IMR-90 (cell line): ENCODE measurements at regions of chr14 and their contacts with region 1.

Region 1: DNA sequence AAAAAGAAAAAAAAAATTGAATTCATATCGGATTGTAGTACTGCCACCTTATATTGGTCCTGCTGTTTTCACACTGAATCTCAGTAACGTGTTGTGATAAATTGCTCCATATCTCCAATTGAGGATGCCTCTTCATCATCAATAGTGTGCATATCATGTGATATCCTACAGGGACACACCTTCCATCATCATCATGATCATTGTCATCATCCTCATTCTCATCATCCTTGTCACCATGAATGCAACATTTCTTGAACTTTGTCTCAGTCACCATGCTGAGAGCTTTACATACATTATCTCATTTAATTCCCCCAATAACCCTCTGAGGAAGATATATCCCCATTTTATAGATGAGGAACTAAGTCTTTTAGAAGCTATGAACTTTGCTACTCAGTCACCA is 22.7 kb downstream of the NPAS3 start:
- DNase-seq: no peak
- ATAC-seq: no peak
- H3K4me3 ChIP-seq: no peak overlapping the region
- H3K27ac ChIP-seq: no peak overlapping the region
- H3K4me1 ChIP-seq: no peaks in the 10 kb centered on the region
- H3K27me3 ChIP-seq: no peaks in the 10 kb centered on the region
- CTCF ChIP-seq: no peak
- POLR2A ChIP-seq: no peak
- RAD21 ChIP-seq: no peak

Region 2: DNA sequence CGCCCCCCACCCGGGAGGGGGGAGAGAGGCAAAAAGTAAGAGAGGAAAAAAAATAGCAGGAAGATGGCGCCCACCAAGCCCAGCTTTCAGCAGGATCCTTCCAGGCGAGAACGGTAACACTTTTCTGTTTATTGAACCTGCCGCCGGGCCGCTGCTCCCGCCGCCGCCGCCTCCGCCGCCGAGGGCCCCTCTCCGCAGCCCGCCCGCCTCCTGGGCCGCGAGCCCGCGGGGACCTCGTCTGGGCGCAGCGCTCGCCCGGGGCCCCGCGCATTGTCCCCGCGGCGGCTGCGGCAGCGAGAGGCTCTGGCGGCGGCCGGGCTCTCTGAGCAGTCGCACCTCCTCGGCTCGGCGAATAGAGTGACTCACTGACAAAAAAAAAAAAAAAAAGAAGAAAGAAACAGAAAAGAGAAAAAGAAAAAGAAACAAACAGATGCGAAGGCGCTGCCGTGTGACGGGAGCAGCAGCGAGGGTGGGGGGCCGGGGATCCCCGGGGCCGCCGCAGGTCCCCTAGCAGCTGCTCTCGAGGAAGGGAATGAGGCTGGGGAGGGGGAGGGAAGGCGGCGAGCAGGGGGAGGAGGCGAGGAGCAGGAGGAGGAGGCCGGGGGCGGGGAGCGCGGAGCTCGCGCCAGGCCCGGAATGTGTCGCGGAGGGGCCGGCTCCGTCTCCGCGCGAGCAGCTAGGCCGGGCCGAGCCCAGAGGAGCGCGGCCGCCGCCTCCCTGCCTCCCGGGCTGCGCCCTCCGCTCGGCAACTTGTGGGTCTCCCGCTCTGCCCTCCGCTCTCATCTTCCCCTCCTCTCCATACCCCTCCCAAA is 22.0 kb before region 1 on chr14:
- CTCF ChIA-PET with region 1: interaction called, 10 read pairs
- POLR2A ChIA-PET with region 1: no interaction called
- dilution Hi-C with region 1: no loop called
- in situ Hi-C with region 1: no loop called
- intact Hi-C with region 1: no loop called
- DNase-seq: peak; percentile 16
- ATAC-seq: peak; percentile 80
- H3K4me3 ChIP-seq: peak overlapping the region; percentile 47
- H3K27ac ChIP-seq: no peak overlapping the region
- H3K4me1 ChIP-seq: peaks cover 3% of the 10 kb centered on the region; the same call in 1 of the 2 replicates
- H3K27me3 ChIP-seq: peaks cover 40% of the 10 kb centered on the region
- CTCF ChIP-seq: no peak
- POLR2A ChIP-seq: no peak
- RAD21 ChIP-seq: no peak